ENCODE measurements at regions of chr22 and their contacts with region 1.

Region 1: DNA sequence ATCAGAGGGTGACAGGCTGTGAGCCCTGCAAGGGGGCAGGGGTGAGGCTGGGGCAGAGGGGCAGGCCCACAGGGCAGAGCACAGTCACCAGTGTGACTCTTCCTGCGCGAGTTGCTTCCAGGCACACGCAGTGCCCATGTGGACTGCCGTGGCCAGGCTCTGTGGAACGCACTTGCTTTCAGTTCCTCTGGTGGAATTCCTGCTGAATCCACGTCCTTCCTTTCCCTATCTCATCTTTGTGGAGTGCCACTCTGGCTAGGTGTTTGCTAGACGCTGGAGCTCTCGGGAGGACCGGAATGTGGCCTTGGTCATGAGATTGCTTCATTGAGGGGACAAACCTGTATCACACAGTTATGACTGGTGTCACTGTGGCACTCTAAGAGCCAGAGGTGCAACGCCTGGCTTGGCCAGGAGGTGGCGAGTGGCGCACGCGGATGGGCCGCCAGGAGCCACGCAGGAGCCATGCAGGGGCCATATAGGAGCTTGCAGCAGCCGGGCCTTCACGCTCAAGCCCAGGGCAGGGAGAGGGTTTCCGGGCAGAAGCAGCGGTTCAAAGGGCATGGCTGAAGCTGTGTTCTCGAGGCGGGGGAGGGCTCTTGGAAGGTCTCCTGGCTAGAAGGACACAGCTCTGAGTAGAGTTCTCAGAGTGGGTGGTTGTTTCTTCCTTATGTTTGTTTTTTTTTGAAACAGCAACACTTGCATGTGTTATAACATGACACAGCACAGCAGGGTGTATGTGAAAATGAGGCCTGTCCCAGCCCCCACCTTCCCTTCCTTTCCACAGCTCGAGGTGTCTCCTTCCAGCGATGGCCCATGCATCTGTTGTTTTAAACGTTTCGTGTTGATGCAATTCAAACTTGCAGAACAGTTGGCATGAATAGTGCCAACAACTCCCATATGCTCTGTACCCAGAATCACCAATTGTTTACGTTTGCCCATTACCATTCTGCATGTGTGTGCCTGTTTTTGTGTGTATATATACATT is 36.2 kb downstream of the TBC1D22A start:
- DNase-seq: no peak
- ATAC-seq: peak; percentile 93
- H3K4me3 ChIP-seq: no peak overlapping the region
- H3K27ac ChIP-seq: no peak overlapping the region
- H3K4me1 ChIP-seq: no peaks in the 10 kb centered on the region
- H3K27me3 ChIP-seq: no peaks in the 10 kb centered on the region
- CTCF ChIP-seq: peak; percentile 70 to 87 (median 87)
- EP300 ChIP-seq: no peak
- POLR2A ChIP-seq: no peak
- RAD21 ChIP-seq: peak; percentile 63

Region 2: GRCh38 chr22:46737976-46738646 is 60.5 kb before region 1 on chr22 and contains the start of gene CERK:
- CTCF ChIA-PET with region 1: interaction called, 5 read pairs
- POLR2A ChIA-PET with region 1: no interaction called
- RAD21 ChIA-PET with region 1: interaction called, 12 read pairs
- SMC1A ChIA-PET with region 1: interaction called, 6 read pairs
- in situ Hi-C with region 1: no loop called
- intact Hi-C with region 1: no loop called
- DNase-seq: no peak
- ATAC-seq: peak; percentile 61
- H3K4me3 ChIP-seq: peak within 1 kb of the TSS; percentile 96
- H3K27ac ChIP-seq: peak within 1 kb of the TSS; percentile 63
- H3K4me1 ChIP-seq: peaks cover 30% of the 10 kb centered on the region
- H3K27me3 ChIP-seq: no peaks in the 10 kb centered on the region
- CTCF ChIP-seq: no peak
- EP300 ChIP-seq: no peak
- POLR2A ChIP-seq: peak; percentile 56; the same call in 1 of the 2 replicates
- RAD21 ChIP-seq: no peak
- polyA plus RNA-seq, gene CERK: 4.0 to 5.8 TPM

Region 3: GRCh38 chr22:46769191-46769675 is 29.4 kb before region 1 on chr22:
- CTCF ChIA-PET with region 1: interaction called, 297 read pairs
- POLR2A ChIA-PET with region 1: interaction called, 5 read pairs
- RAD21 ChIA-PET with region 1: interaction called, 199 read pairs
- SMC1A ChIA-PET with region 1: interaction called, 28 read pairs
- in situ Hi-C with region 1: no loop called
- intact Hi-C with region 1: no loop called
- DNase-seq: no peak
- ATAC-seq: peak; percentile 56
- H3K4me3 ChIP-seq: peak overlapping the region; percentile 62
- H3K27ac ChIP-seq: peak overlapping the region; percentile 90
- H3K4me1 ChIP-seq: peaks cover 62% of the 10 kb centered on the region
- H3K27me3 ChIP-seq: no peaks in the 10 kb centered on the region
- CTCF ChIP-seq: no peak
- EP300 ChIP-seq: no peak
- POLR2A ChIP-seq: peak; percentile 31; the same call in 1 of the 2 replicates
- RAD21 ChIP-seq: no peak

Region 4: GRCh38 chr22:46774253-46774979 is 24.2 kb before region 1 on chr22:
- CTCF ChIA-PET with region 1: interaction called, 48 read pairs
- POLR2A ChIA-PET with region 1: no interaction called
- RAD21 ChIA-PET with region 1: interaction called, 18 read pairs
- SMC1A ChIA-PET with region 1: interaction called, 8 read pairs
- in situ Hi-C with region 1: no loop called
- intact Hi-C with region 1: no loop called
- DNase-seq: no peak
- ATAC-seq: peak; percentile 62
- H3K4me3 ChIP-seq: peak overlapping the region; percentile 73
- H3K27ac ChIP-seq: peak overlapping the region; percentile 94
- H3K4me1 ChIP-seq: peaks cover 63% of the 10 kb centered on the region
- H3K27me3 ChIP-seq: no peaks in the 10 kb centered on the region
- CTCF ChIP-seq: no peak; a peak in 1 of 6 replicates
- EP300 ChIP-seq: peak in 1 of 2 experiments; percentile 69; a peak in 1 of 4 replicates
- POLR2A ChIP-seq: no peak; the same call in none of the 2 replicates
- RAD21 ChIP-seq: no peak

Region 5: DNA sequence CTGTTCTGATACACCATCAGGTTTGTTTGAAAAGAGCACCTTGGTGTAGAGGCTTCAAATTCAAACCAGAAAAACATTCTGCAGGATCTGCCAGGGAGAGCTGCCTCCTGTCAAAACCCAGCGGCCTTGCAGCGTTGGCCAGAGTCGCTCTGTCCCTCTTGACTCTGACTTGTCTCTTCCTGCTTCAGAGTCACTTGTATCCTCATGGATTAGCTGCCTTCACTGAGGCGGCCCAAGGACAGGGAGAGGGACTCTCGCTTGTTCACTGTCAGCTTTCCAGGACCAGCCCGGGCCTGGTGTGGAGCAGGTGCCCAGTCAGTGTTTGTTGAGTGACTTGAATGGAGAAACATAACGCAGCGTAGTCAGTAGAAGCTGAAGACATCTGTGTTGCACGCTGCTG is 18.2 kb before region 1 on chr22:
- CTCF ChIA-PET with region 1: interaction called, 48 read pairs
- POLR2A ChIA-PET with region 1: no interaction called
- RAD21 ChIA-PET with region 1: interaction called, 14 read pairs
- SMC1A ChIA-PET with region 1: interaction called, 8 read pairs
- in situ Hi-C with region 1: no loop called
- intact Hi-C with region 1: no loop called
- DNase-seq: no peak
- ATAC-seq: no peak
- H3K4me3 ChIP-seq: no peak overlapping the region; the same call in 1 of the 2 replicates
- H3K27ac ChIP-seq: no peak overlapping the region
- H3K4me1 ChIP-seq: peaks cover 31% of the 10 kb centered on the region
- H3K27me3 ChIP-seq: no peaks in the 10 kb centered on the region
- CTCF ChIP-seq: no peak
- EP300 ChIP-seq: no peak
- POLR2A ChIP-seq: no peak
- RAD21 ChIP-seq: no peak

Region 6: GRCh38 chr22:46815896-46816731 is 17.5 kb after region 1 on chr22:
- CTCF ChIA-PET with region 1: interaction called, 32 read pairs
- POLR2A ChIA-PET with region 1: no interaction called
- RAD21 ChIA-PET with region 1: no interaction called
- SMC1A ChIA-PET with region 1: interaction called, 3 read pairs
- in situ Hi-C with region 1: no loop called
- intact Hi-C with region 1: no loop called
- DNase-seq: no peak
- ATAC-seq: no peak
- H3K4me3 ChIP-seq: no peak overlapping the region
- H3K27ac ChIP-seq: no peak overlapping the region
- H3K4me1 ChIP-seq: no peaks in the 10 kb centered on the region
- H3K27me3 ChIP-seq: no peaks in the 10 kb centered on the region
- CTCF ChIP-seq: no peak
- EP300 ChIP-seq: no peak
- POLR2A ChIP-seq: no peak
- RAD21 ChIP-seq: no peak

Measured in GM12878 (cell line).